ENCODE measurements at regions of chr17 and their contacts with region 1.

Region 1: DNA sequence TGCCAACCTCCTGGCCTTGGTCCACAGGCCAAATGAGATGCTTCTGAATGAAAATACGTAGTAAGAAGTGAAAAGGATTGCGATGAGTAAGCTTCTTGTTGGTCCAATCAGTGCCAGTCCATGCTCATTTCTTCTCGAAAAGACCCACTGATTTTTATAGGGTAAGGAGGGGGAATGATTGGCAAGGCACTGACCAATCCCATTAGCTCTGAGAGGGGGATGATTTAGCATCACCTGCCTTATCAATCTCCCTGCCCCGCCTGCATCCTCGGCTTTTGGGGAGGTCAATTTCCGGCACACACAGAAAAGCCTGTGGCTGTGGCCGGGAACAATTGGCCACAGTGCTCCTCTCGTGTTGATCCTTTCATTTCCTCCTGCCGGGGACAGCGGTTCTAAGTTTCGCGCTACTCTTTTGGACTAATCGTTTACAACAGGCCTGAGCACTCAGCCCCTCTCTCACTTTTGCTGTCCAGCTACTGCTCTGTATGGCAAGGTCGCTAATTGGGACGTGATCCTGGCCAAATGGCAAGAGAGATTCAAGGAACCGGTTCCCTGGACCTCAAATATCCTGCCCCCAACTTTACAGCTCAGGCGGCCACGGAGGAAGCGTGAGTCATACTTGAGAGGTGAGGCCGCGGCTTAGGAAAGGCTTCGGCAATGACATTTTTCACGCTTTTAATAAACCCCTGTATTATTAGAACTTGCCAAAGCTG is 43.1 kb downstream of the TBX4 start:
- DNase-seq: no peak

Region 2: GRCh38 chr17:61383689-61384201 is 111.6 kb before region 1 on chr17:
- CTCF ChIA-PET with region 1: no interaction called
- POLR2A ChIA-PET with region 1: no interaction called
- DNase-seq: no peak

Region 3: GRCh38 chr17:61426013-61426730 is 69.1 kb before region 1 on chr17:
- CTCF ChIA-PET with region 1: no interaction called
- POLR2A ChIA-PET with region 1: no interaction called
- DNase-seq: no peak

Region 4: DNA sequence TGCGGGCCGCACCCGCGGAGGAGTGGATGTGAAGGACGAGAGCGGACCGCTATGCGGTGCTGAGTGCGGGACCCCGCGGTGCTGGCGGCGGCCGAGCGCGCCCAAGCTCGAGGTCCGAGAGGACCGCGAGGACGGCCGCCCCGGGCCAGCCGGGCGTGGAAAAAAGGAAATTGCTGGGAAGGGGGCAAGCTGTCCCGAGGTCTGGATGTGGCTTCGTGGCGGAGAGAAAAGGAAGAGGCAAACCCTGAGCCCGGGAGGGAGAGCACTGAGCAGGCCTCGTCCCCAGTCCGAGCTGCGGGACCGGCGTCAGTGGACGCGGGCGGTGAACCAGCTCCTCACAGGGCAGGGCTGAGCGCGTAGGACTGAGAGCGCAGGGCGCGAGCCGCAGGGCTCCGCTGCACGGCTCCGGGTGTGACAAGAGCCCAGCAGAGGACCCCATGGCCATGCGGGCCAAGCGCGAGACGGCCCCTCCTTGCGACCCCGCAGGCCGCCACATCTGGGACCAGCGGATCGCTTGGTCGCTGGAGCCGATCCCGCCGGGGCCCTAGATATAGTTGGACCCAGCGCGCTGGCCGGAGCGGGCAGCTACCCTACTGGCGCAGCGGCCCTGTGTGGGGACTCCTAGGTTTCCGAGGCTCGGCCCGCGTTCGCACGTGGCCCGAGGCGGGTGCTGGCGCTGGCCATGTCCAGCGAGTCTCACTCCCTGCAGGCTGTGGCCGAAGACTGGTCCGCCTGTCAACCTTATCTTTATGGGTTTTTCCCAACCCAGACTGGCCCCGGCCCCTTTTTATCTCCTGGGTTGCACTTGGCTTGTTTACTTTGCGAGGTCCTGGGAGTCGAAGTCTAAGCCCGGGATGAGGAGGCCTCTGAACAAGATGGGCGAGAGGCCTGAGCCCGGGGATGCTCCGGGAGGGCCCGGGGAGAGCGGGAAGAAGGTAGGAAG is 40.6 kb before region 1 on chr17:
- CTCF ChIA-PET with region 1: no interaction called
- POLR2A ChIA-PET with region 1: no interaction called
- DNase-seq: no peak

Region 5: GRCh38 chr17:61467416-61468259 is 27.7 kb before region 1 on chr17:
- CTCF ChIA-PET with region 1: interaction called, 3 read pairs
- POLR2A ChIA-PET with region 1: interaction called, 18 read pairs
- DNase-seq: peak; percentile 59

Region 6: GRCh38 chr17:61511480-61512182 is 16.3 kb after region 1 on chr17:
- CTCF ChIA-PET with region 1: interaction called, 10 read pairs
- POLR2A ChIA-PET with region 1: interaction called, 27 read pairs
- DNase-seq: no peak